Gastrocnemius medialis (tissue), 4 donors: ENCODE measurements at regions of chr1 and their contacts with region 1.

Region 1: GRCh38 chr1:156751758-156752757 is 583 bp upstream of the HDGF start:
- DNase-seq: peak; percentile 99
- ATAC-seq: peak; percentile 57 to 63
- H3K4me3 ChIP-seq: peak overlapping the region; percentile 86 to 100 (median 96)
- H3K27ac ChIP-seq: peak overlapping the region; percentile 94 to 100 (median 100)
- H3K4me1 ChIP-seq: peaks cover 46 to 55% of the 10 kb centered on the region in 2 donors
- H3K27me3 ChIP-seq: no peaks in the 10 kb centered on the region
- CTCF ChIP-seq: no peak
- POLR2A ChIP-seq: peak; percentile 79 to 88

Region 2: DNA sequence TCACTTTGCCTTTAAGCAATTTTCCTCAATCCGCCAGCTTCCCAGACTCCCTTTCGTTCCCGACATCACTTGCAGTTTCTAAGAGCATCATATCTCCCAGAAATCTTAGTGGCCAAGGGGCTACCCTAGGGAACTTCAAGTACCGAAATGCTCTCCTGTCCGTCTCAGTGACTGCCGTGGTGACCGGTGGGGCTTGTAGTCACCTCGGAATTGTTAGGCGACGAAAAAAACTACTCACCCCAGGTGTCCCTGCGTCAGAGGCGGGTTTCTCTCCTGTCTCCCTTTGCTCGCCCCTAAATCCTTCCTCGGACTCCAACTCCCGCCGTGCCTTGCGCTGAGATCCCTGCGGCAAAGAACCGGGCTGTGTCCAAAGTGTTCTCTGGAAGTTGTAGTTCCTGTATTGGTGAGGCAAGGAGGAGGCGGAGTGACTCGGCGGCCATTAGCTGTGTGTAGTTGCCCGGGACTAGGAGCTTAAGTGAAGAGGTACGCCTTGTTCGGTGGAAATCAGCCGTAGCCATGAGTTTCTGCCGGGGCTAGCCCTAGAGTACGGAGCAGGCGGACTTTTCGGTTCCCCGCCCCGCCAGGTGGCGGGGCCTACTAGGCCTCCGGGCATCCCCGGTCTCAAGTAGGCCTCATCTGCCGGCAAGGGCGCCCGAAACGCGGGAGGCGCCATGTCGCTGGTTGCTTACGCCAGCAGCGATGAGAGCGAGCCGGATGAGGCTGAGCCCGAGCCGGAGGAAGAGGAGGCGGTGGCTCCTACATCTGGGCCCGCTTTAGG is 15.2 kb after region 1 on chr1 and contains the start of gene PRCC:
- in situ Hi-C with region 1: no loop called
- intact Hi-C with region 1: loop called (anchors 1 kb)
- DNase-seq: peak; percentile 99
- ATAC-seq: peak; percentile 96
- H3K4me3 ChIP-seq: peak within 1 kb of the TSS; percentile 76 to 98 (median 90)
- H3K27ac ChIP-seq: peak within 1 kb of the TSS; percentile 87 to 98 (median 94)
- H3K4me1 ChIP-seq: peaks cover 35 to 40% of the 10 kb centered on the region in 2 donors
- H3K27me3 ChIP-seq: no peaks in the 10 kb centered on the region
- CTCF ChIP-seq: peak in 1 of 5 experiments; percentile 14
- POLR2A ChIP-seq: peak; percentile 74 to 84
- total RNA-seq, gene PRCC: 42.8 to 62.3 (median 46.5) TPM